ENCODE measurements at regions of chr6 and their contacts with region 1.

Region 1: GRCh38 chr6:168206661-168207274 is 112.8 kb downstream of the DACT2 start:
- DNase-seq: no peak
- ATAC-seq: no peak
- H3K4me3 ChIP-seq: no peak overlapping the region
- H3K4me3 Mint-ChIP-seq: no peak overlapping the region
- H3K27ac ChIP-seq: no peak overlapping the region
- H3K27ac Mint-ChIP-seq: no peak overlapping the region
- H3K4me1 ChIP-seq: no peaks in the 10 kb centered on the region
- H3K4me1 Mint-ChIP-seq: no peaks in the 10 kb centered on the region
- H3K27me3 ChIP-seq: no peaks in the 10 kb centered on the region
- H3K27me3 Mint-ChIP-seq: peaks cover 2 to 14% of the 10 kb centered on the region in 2 donors
- CTCF ChIP-seq: no peak

Region 2: DNA sequence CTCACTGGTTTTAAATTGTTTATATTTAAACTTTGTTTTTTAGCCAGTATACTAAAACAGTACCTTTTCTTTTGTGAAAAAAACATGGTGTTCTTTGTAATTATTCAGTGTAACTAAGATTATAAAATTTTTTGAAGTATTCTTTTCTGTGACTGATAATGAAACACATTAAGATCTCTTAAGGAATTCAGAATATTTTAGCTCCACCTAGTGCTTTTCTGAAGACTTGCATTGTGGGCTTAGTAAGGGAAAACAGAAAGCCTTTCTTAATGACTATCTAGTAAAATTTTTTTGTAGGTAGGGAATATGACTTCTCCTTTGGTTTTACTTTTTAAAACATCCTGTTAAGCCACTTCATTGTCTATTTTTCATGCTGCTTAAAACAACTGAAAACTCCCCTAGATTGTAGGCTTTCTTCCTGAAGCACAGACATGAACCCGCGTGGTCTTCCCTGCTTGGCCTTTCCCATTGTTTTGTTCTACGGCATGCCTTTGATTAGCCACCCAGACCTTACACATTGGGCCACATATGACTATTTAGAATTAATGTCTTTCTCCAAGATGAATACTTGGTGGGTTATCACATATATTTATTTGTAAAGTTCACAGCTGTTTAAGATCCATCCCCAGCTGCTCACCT is 308.0 kb before region 1 on chr6:
- intact Hi-C with region 1: no loop called
- DNase-seq: peak in 1 of 2 donors; percentile 24
- ATAC-seq: no peak
- H3K4me3 ChIP-seq: no peak overlapping the region
- H3K4me3 Mint-ChIP-seq: no peak overlapping the region
- H3K27ac ChIP-seq: no peak overlapping the region
- H3K27ac Mint-ChIP-seq: no peak overlapping the region
- H3K4me1 ChIP-seq: no peaks in the 10 kb centered on the region
- H3K4me1 Mint-ChIP-seq: no peaks in the 10 kb centered on the region
- H3K27me3 ChIP-seq: no peaks in the 10 kb centered on the region
- H3K27me3 Mint-ChIP-seq: no peaks in the 10 kb centered on the region
- CTCF ChIP-seq: no peak

Region 3: DNA sequence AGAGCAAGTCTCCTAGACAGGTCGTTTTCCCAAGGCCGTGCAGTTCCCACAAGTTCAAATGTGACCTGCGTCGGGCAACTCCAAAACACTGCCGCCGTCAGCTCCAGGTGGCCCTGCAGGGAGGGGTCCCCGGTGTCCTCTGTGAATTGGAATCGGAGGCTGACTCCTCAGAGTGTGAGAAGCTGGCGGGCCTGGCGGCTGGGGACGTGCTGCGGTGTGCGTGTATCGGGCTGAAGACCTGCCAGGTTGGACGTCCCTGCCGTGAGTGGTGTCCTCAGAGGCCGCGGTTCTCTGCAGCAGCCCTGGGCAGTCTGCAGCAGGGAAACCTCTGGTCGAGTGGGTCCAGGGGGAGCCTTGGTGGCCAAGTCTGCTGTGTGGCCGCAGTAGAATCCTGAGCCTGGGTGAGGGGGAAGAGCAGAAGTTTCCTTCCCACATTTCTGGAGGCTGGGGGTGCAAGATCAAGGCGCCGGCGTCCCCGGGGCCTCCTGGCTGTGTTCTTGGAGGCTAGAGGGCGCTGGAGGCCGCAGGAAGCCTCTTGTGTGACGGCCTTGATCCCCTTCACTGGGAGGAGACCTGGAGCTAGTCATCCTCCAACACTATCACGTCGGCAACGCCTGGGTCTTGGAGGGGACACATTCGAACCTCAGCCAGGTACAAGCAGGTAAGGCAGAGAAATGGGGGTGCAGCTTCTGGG is 12.6 kb before region 1 on chr6:
- intact Hi-C with region 1: loop called (anchors 1 kb)
- DNase-seq: no peak
- ATAC-seq: no peak
- H3K4me3 ChIP-seq: no peak overlapping the region
- H3K4me3 Mint-ChIP-seq: no peak overlapping the region
- H3K27ac ChIP-seq: no peak overlapping the region
- H3K27ac Mint-ChIP-seq: no peak overlapping the region
- H3K4me1 ChIP-seq: no peaks in the 10 kb centered on the region
- H3K4me1 Mint-ChIP-seq: peaks cover 0 to 7% of the 10 kb centered on the region in 2 donors
- H3K27me3 ChIP-seq: no peaks in the 10 kb centered on the region
- H3K27me3 Mint-ChIP-seq: peaks cover 8 to 15% of the 10 kb centered on the region in 2 donors
- CTCF ChIP-seq: no peak

Region 4: GRCh38 chr6:168400037-168400436 is 193.3 kb after region 1 on chr6:
- intact Hi-C with region 1: no loop called
- DNase-seq: no peak
- ATAC-seq: no peak
- H3K4me3 ChIP-seq: no peak overlapping the region
- H3K4me3 Mint-ChIP-seq: no peak overlapping the region
- H3K27ac ChIP-seq: no peak overlapping the region
- H3K27ac Mint-ChIP-seq: no peak overlapping the region
- H3K4me1 ChIP-seq: no peaks in the 10 kb centered on the region
- H3K4me1 Mint-ChIP-seq: no peaks in the 10 kb centered on the region
- H3K27me3 ChIP-seq: no peaks in the 10 kb centered on the region
- H3K27me3 Mint-ChIP-seq: peaks cover 8 to 12% of the 10 kb centered on the region in 2 donors
- CTCF ChIP-seq: no peak